ENCODE measurements at regions of chr17 and their contacts with region 1.

Region 1: GRCh38 chr17:57408071-57408811 is 151.9 kb downstream of the MSI2 start:
- DNase-seq: no peak

Region 2: GRCh38 chr17:57311281-57312216 is 96.7 kb before region 1 on chr17:
- in situ Hi-C with region 1: no loop called
- DNase-seq: no peak

Region 3: GRCh38 chr17:57366558-57367351 is 41.5 kb before region 1 on chr17:
- in situ Hi-C with region 1: loop called (anchors 5 kb)
- DNase-seq: peak; percentile 98

Measured in Caki2 (cell line).